ENCODE measurements at regions of chr10 and their contacts with region 1.

Region 1: GRCh38 chr10:122854648-122855047 is 9.0 kb upstream of the CUZD1 start:
- DNase-seq: peak; percentile 88
- ATAC-seq: peak; percentile 74
- H3K4me3 ChIP-seq: peak overlapping the region; percentile 53; the same call in 1 of the 2 replicates
- H3K27ac ChIP-seq: peak overlapping the region; percentile 97
- H3K4me1 ChIP-seq: peaks cover 77% of the 10 kb centered on the region
- H3K27me3 ChIP-seq: no peaks in the 10 kb centered on the region
- CTCF ChIP-seq: no peak

Region 2: GRCh38 chr10:122864895-122865294 is 10.2 kb after region 1 on chr10:
- CTCF ChIA-PET with region 1: no interaction called
- POLR2A ChIA-PET with region 1: interaction called, 11 read pairs
- intact Hi-C with region 1: loop called (anchors 1 kb)
- DNase-seq: peak; percentile 84
- ATAC-seq: peak; percentile 85
- H3K4me3 ChIP-seq: no peak overlapping the region
- H3K27ac ChIP-seq: peak overlapping the region; percentile 65
- H3K4me1 ChIP-seq: peaks cover 44% of the 10 kb centered on the region
- H3K27me3 ChIP-seq: no peaks in the 10 kb centered on the region
- CTCF ChIP-seq: no peak

Region 3: DNA sequence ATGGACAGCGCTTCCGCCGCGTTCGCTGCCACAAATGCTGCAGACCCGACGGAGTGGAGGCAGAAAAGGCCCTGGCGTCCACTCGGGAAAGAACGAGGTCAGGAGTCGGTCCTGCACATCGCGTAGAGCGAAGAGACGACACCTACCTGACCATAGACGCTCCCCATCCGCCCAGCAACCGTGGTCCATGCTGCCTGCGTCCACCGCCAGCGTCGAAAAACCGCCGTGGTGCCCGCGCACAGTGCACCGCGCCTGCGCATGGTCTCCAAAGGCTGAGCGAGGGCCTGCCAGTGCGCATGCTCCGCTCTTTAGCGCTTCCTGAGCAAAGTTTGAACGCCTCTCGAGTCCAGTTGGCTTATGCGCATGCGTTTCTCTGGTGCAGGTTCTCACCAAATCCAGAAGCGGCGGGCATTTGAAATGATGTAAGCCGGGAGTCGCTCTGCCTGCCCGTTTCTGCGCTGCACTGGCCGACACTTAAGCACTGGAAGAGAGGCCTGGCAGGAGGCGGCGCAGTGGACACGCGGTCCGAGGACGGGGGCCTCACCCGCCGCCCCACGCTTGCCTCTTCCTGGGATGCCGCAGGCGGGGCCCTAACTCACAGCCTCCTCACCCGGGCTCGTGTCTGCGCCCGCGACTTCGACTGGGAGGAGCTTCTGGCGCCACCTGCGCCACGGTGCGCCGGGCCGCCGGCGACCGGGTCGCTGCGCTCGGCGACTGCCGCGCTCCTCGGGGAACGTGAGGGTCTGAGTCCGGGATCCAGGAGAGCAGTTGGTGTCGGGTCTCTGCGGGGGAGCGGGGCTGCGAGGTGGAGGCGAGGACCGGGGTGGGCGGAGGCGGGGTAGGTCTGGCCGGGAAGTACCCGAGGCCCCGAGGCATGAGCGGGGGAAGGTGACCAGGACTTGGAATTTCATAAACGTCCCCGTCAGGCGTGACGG is 25.0 kb after region 1 on chr10 and contains the start of gene FAM24B:
- CTCF ChIA-PET with region 1: no interaction called
- POLR2A ChIA-PET with region 1: no interaction called
- intact Hi-C with region 1: loop called (anchors 1 kb)
- DNase-seq: peak; percentile 94
- ATAC-seq: peak; percentile 84
- H3K4me3 ChIP-seq: peak within 1 kb of the TSS; percentile 76
- H3K27ac ChIP-seq: peak within 1 kb of the TSS; percentile 69
- H3K4me1 ChIP-seq: peaks cover 24% of the 10 kb centered on the region
- H3K27me3 ChIP-seq: no peaks in the 10 kb centered on the region
- CTCF ChIP-seq: no peak
- total RNA-seq, gene FAM24B: 5.2 and 12.4 TPM in 2 replicates

Region 4: GRCh38 chr10:122980209-122981065 is 125.8 kb after region 1 on chr10 and contains the start of gene PSTK:
- CTCF ChIA-PET with region 1: no interaction called
- POLR2A ChIA-PET with region 1: no interaction called
- intact Hi-C with region 1: loop called (anchors 5 kb)
- DNase-seq: peak; percentile 83
- ATAC-seq: peak; percentile 97
- H3K4me3 ChIP-seq: peak within 1 kb of the TSS; percentile 82
- H3K27ac ChIP-seq: peak within 1 kb of the TSS; percentile 79
- H3K4me1 ChIP-seq: peaks cover 9% of the 10 kb centered on the region; the same call in 1 of the 2 replicates
- H3K27me3 ChIP-seq: no peaks in the 10 kb centered on the region
- CTCF ChIP-seq: peak; percentile 65
- total RNA-seq, gene PSTK: 2.3 and 2.6 TPM in 2 replicates

Measured in PC-3 (cell line).